Activated T-helper 2 cell treated with anti-CD3 and anti-CD28 coated beads, Interferon-gamma antibody, Interleukin-2, Interleukin-4, amounts not matched to agents 10 μg/mL and 5 μg/mL and 100 μg/mL, durations not matched to agents 14 hours and 24 hours and 36 hours (primary cell): ENCODE measurements at regions of chr1 and their contacts with region 1.

Region 1: DNA sequence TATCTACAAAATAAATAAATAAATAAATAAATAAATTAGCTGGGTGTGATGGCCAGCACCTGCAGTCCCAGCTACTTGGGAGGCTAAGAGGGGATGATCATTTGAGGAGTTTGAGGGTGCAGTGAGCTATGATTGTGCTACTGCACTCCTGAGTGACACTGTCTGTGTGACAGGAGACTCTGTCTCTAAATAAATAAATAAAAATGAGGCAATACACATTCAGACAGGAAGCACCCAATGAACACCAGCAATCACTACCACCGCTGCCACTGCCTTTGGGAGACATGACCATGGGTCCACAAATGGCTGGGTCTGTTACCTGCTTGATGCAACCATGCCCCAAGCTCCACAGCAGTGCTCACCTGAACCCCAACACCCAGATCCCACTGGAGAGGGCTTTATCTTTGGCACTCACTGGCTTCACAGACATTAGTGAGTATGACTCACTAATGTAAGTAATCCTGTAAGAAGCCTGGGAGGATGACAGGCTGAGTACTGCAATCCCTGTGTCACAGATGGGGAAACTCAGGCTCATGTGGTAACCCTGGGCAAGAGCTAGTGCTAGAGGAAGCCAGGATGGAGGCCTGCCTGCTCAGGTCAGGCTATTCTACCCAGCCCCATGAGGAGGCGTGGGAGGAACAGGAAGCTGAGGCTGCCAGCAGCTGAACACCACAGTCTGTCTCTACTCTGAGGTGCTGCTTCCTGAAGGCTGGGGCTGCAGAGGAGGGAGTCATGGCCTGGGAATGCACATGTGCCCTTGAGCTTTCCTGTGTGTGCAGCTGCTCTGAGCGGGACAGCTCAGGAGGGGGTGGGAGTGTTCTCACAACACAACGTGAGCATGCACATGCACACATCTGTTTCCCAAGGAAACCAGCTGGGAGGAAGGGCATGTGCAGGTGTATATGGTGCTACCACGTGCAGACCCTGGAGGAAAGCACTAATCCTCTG is 43.0 kb downstream of the SLC9A1 start:
- DNase-seq: peak; percentile 55
- H3K4me3 Mint-ChIP-seq: no peak overlapping the region
- H3K27ac Mint-ChIP-seq: peak overlapping the region; percentile 85
- H3K4me1 Mint-ChIP-seq: peaks cover 40% of the 10 kb centered on the region
- H3K27me3 Mint-ChIP-seq: no peaks in the 10 kb centered on the region

Region 2: DNA sequence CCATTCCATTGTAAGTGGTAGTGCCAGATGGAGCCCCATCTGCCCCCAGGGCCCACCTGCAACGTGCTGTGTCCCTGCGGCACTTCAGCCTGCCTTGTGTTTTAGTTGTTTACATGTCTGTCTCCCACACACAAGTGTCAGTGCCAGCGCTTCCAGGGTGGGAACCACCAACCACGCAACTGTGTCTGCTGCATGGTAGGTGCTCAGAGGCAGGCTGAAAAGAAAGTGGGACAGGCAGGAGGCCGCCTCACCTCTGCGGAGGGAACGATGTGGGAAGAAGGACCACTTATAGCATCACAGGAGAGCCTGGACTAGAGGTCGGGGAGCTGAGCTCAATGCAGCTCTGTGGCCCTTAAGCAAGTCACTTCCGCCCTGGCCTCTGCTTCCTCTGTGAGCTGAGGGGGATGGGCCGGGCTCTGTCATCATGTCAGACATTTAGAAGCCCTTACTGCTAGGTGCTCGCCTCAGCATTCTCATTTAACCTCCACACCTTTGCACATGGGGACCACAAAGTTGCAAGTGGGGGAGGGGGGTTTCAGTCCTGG is 25.2 kb after region 1 on chr1:
- intact Hi-C with region 1: loop called (anchors 2 kb)
- DNase-seq: peak; percentile 70
- H3K4me3 Mint-ChIP-seq: peak overlapping the region; percentile 81
- H3K27ac Mint-ChIP-seq: peak overlapping the region; percentile 99
- H3K4me1 Mint-ChIP-seq: peaks cover 32% of the 10 kb centered on the region
- H3K27me3 Mint-ChIP-seq: no peaks in the 10 kb centered on the region